ENCODE measurements at regions of chr9 and their contacts with region 1.

Region 1: DNA sequence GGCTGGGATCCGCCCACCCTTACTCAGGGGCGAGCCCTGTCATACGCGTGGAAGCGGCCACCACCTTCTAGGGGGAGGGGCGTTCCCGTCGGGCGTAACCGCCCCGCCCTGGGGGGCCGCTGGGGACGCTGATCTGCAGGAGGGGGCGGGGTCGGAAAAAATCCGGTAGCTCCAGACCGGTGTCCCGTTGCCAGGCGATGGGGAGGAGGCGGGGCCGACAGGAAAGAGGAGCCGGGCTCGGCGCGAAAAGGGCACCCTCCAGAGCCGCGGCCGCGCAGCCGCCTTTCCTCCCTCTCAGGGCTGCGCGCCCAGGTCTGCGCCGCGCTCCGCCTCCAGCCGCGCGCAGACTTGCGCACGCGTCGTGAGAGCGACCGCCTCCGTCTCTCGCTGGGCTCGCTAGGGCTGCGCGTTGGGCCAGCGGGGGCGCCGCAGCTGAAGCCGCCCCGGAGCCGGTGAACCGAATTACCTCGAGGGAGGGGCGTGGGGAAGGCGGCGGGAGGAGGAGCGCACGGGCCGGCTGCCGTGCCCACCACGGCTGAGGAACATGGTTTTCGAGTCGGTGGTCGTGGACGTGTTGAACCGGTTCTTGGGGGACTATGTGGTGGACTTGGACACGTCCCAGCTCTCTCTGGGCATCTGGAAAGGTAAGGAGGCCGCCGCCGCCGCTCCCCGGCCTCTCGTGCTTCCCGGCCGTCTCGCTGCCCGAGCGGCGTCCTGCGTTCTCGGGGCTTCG is at the start of gene VPS13A:
- DNase-seq: peak; percentile 97
- H3K4me3 Mint-ChIP-seq: peak within 1 kb of the TSS; percentile 86
- H3K27ac Mint-ChIP-seq: peak within 1 kb of the TSS; percentile 87
- H3K4me1 Mint-ChIP-seq: peaks cover 22% of the 10 kb centered on the region
- H3K27me3 Mint-ChIP-seq: no peaks in the 10 kb centered on the region
- total RNA-seq, gene VPS13A: 27.3 to 30.4 TPM

Region 2: DNA sequence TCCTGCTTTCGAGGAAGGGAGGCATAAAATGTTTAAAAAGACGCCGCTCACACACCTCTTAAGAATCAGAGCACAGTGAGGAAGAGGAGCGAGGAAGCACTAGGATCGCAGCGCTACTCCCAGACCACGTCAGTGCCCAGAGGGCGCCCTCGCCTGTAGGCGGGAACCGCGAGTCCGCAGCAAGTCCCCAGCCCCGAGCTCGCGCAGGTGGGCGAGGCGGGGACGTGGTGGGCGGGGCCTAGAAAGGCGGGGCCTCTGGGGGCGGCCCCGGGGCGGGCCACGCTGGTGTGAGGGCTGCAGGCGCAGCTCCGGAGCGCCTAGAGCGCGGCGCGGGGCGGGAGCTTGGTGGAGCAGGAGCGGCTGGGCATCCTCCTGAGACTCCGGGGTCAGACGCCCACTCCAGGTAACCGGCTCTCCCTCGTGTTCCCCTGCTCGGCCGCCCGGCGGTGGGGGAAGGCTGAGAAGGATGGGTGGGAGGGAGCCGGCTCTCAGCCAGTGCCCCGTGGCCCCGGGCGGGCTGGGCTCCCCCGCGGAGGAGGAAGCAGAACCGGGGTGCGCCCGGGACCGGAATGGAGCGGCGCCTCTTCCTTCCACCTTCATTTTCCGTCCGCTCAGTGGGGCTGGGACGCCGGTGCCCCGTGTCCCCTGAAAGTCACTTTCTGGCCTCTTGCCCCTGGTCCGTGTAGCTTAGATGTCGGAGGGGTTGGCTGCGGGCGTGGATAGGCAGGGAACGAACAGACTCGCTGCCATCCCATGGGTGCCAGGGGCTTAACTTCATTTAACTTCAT is 718.2 kb before region 1 on chr9 and contains the start of gene GCNT1:
- CTCF ChIA-PET with region 1: no interaction called
- POLR2A ChIA-PET with region 1: no interaction called
- intact Hi-C with region 1: loop called (anchors 10 kb)
- DNase-seq: peak; percentile 94
- H3K4me3 Mint-ChIP-seq: peak within 1 kb of the TSS; percentile 94
- H3K27ac Mint-ChIP-seq: peak within 1 kb of the TSS; percentile 49
- H3K4me1 Mint-ChIP-seq: peaks cover 18% of the 10 kb centered on the region
- H3K27me3 Mint-ChIP-seq: no peaks in the 10 kb centered on the region
- total RNA-seq, gene GCNT1: 6.7 to 6.9 TPM

Region 3: GRCh38 chr9:77163884-77164283 is 13.4 kb before region 1 on chr9:
- CTCF ChIA-PET with region 1: interaction called, 32 read pairs
- POLR2A ChIA-PET with region 1: interaction called, 3 read pairs
- intact Hi-C with region 1: loop called (anchors 1 kb)
- DNase-seq: no peak
- H3K4me3 Mint-ChIP-seq: no peak overlapping the region
- H3K27ac Mint-ChIP-seq: no peak overlapping the region
- H3K4me1 Mint-ChIP-seq: no peaks in the 10 kb centered on the region
- H3K27me3 Mint-ChIP-seq: peaks cover 8% of the 10 kb centered on the region

Region 4: DNA sequence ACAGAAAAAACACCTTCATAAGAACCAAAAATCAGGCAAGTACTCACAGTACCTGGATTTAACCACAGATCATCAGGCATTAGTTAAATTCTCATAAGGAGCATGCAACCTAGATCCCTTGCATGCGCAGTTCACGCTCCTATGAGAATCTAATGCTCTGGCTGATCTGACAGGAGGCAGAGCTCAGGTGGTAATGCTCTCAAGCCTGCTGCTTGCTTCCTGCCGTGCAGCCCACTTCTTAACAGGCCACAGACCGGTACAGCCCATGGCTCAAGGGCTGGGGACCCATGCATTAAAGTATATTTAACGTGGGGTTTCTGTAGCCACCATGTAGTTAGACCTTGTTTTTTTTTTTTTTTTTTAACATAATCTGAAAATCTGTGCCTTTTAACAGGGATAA is 147.7 kb after region 1 on chr9:
- CTCF ChIA-PET with region 1: no interaction called
- POLR2A ChIA-PET with region 1: no interaction called
- intact Hi-C with region 1: no loop called
- DNase-seq: no peak
- H3K4me3 Mint-ChIP-seq: no peak overlapping the region
- H3K27ac Mint-ChIP-seq: no peak overlapping the region
- H3K4me1 Mint-ChIP-seq: peaks cover 9% of the 10 kb centered on the region
- H3K27me3 Mint-ChIP-seq: no peaks in the 10 kb centered on the region

Region 5: GRCh38 chr9:77725820-77726219 is 548.5 kb after region 1 on chr9:
- CTCF ChIA-PET with region 1: no interaction called
- POLR2A ChIA-PET with region 1: no interaction called
- intact Hi-C with region 1: loop called (anchors 10 kb)
- DNase-seq: peak; percentile 62
- H3K4me3 Mint-ChIP-seq: no peak overlapping the region
- H3K27ac Mint-ChIP-seq: peak overlapping the region; percentile 77
- H3K4me1 Mint-ChIP-seq: peaks cover 45% of the 10 kb centered on the region
- H3K27me3 Mint-ChIP-seq: no peaks in the 10 kb centered on the region

Region 6: DNA sequence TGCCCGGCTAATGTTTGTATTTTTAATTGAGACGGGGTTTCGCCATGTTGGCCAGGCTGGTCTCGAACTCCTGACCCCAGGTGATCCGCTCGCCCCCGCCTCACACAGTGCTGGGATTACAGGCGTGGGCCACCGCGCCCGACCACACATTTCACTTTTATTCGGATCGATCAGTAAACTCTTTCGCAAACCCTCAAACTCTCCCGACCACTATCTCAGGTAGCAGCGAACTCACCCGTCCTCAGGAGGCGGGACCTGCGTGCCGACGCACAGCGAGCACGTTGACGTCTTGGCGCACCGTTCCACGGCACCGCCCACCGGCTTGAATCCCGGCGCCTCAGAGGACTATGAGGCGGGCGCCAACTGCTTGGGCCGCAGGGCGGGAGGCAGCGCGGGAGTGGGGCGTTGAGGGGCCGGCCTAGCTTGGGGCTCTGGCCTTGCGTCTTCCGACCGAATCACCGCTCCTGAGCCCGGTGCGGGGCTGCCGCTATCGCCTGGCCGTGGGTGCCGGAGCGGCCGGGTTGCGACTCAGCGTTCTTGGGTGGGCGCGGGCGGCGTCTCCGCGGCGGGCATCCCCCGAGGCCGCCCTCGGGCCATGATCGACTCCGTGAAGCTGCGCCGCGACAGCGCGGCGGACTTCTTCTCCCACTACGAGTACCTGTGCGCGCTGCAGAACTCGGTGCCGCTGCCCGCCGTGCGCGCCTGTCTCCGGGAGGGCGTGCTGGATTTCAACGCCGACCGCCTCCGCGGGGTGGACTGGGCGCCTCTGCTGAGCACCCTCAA is 1058.6 kb after region 1 on chr9 and contains the start of gene CEP78:
- CTCF ChIA-PET with region 1: no interaction called
- POLR2A ChIA-PET with region 1: no interaction called
- intact Hi-C with region 1: loop called (anchors 10 kb)
- DNase-seq: peak; percentile 93
- H3K4me3 Mint-ChIP-seq: peak within 1 kb of the TSS; percentile 94
- H3K27ac Mint-ChIP-seq: peak within 1 kb of the TSS; percentile 91
- H3K4me1 Mint-ChIP-seq: peaks cover 31% of the 10 kb centered on the region
- H3K27me3 Mint-ChIP-seq: no peaks in the 10 kb centered on the region
- total RNA-seq, gene CEP78: 40.1 to 42.2 TPM

Region 7: DNA sequence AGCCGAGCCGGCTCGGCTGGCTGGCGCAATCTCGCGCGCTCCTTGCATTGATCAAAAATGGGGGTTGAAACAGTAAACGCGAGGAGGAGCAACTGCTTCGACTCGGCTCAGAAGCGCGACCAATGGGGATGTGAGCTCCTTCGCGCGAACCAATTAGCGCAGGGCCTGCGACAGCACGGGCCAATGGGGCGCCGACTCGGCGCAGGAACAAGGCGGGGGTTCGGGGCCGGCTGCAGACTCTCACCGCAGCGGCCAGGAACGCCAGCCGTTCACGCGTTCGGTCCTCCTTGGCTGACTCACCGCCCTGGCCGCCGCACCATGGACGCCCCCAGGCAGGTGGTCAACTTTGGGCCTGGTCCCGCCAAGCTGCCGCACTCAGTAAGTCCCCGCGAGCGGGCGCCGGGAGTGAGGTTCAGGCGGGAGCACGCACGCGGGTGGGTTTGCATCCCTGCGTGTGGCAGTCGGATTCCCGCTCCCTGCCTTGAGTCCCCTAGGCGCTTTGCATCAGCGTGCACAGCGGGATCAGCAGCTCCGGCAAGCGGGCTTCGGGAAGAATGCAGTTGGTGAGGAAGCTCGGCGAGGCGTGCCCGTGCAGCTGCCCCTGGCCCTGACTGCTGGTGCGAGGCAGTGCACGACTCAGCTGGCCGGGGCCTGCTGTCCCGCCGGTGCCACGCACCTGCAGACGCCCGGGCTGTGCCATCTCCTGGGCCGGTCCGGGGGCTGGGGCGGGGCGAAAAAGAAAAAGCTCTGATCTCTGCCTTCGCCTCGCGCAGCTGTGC is 1119.8 kb after region 1 on chr9 and contains the start of gene PSAT1:
- CTCF ChIA-PET with region 1: no interaction called
- POLR2A ChIA-PET with region 1: no interaction called
- intact Hi-C with region 1: loop called (anchors 2 kb)
- DNase-seq: peak; percentile 96
- H3K4me3 Mint-ChIP-seq: peak within 1 kb of the TSS; percentile 89
- H3K27ac Mint-ChIP-seq: peak within 1 kb of the TSS; percentile 87
- H3K4me1 Mint-ChIP-seq: peaks cover 44% of the 10 kb centered on the region
- H3K27me3 Mint-ChIP-seq: no peaks in the 10 kb centered on the region
- total RNA-seq, gene PSAT1: 132 to 137 TPM